CD4-positive, alpha-beta T cell (primary cell): ENCODE measurements at regions of chr16 and their contacts with region 1.

Region 1: DNA sequence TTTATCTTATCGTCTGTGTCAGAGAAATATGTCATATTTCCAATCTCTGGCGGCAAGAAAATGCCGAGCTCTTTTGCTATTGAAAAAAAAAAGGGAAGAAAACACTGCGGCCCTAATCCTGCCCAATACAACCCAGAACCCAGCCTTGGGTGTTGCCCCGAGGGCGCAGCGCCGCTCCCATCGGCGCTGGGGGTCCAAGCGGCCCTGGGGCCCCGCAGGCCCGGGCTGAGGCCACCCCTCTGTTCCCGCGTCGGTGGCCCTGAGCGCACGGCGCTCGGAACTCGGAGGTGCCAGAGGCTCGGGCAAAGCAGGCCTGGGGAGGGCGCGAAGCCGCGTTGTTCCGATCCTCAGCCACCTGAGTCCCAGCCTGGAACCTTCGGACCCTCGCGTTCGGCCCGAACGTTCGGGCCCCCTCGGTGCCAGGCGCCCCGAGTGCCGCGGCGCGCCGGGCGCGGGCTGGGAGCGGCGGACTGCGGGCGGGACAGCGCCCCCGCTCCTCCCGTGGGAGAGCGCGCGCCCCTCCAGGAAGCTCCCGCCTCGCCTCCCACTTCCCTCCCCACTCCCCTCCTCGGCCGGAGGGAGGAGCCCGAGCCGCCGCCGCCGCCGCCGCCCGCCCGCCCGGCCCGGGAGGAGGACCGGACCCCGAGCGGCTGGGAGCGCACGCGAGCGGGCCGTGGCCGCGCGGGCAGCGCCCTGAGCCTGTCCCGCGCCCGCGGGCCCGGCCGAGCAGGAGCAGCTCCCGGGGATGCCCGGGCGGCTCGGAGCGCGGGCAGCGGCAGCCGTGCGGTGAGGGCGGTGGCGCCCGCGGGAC is at the start of gene CPNE2:
- DNase-seq: peak in 7 of 14 experiments; percentile 3 to 63 (median 34)
- ATAC-seq: peak; percentile 48
- H3K4me3 ChIP-seq: peak within 1 kb of the TSS; percentile 34
- H3K4me3 Mint-ChIP-seq: peak within 1 kb of the TSS; percentile 87
- H3K27ac ChIP-seq: no peak within 1 kb of the TSS
- H3K27ac Mint-ChIP-seq: no peak within 1 kb of the TSS
- H3K4me1 ChIP-seq: peaks cover 21% of the 10 kb centered on the region
- H3K4me1 Mint-ChIP-seq: peaks cover 11% of the 10 kb centered on the region
- H3K27me3 ChIP-seq: no peaks in the 10 kb centered on the region
- H3K27me3 Mint-ChIP-seq: no peaks in the 10 kb centered on the region
- CTCF ChIP-seq: no peak
- total RNA-seq, gene CPNE2: 2.2 to 3.5 TPM

Region 2: DNA sequence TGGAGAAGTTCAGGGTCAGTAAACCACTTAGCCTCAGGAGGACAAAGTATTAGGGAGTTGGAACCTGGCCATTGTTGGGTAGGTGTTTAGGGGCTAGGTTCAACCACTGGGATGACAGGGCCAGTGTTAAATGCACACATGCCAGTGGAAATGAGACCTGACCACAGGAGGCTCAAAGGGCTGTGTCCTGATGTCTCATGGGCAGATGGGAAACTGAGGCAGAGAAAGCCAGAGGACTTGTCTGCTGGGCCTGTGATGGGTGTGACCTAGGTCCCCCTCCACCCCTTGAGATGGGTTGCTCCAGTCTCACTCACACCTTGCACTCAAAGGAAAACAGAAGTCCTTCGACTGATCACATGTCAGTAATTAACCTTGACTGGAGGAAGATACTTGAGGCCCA is 16.3 kb after region 1 on chr16:
- CTCF ChIA-PET with region 1: no interaction called
- POLR2A ChIA-PET with region 1: no interaction called
- intact Hi-C with region 1: loop called in 1 of 2 experiments (anchors 2 kb)
- DNase-seq: no peak
- ATAC-seq: no peak
- H3K4me3 ChIP-seq: no peak overlapping the region
- H3K4me3 Mint-ChIP-seq: no peak overlapping the region
- H3K27ac ChIP-seq: no peak overlapping the region
- H3K27ac Mint-ChIP-seq: no peak overlapping the region
- H3K4me1 ChIP-seq: peaks cover 25% of the 10 kb centered on the region
- H3K4me1 Mint-ChIP-seq: peaks cover 13% of the 10 kb centered on the region
- H3K27me3 ChIP-seq: no peaks in the 10 kb centered on the region
- H3K27me3 Mint-ChIP-seq: no peaks in the 10 kb centered on the region
- CTCF ChIP-seq: no peak

Region 3: DNA sequence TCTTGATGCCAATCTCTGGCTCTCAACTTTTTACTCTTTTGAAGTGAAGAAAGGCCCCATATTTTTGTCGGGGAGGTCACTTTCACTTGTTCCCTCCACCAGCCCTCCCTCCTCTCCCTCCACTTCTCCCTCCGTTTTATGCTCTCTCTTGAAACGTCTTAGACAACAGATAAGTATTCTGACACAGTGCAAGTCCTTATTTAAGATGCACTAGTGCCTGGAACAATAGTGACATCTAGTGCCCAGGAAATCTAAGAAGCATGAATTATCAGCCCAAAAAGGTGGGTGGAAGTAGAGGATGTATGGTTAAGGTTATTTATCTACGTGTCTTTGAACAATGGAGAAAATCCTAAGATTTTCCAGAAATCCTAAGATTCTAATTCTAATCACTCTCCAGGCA is 75.8 kb after region 1 on chr16:
- CTCF ChIA-PET with region 1: interaction called, 11 read pairs
- POLR2A ChIA-PET with region 1: interaction called, 5 read pairs
- intact Hi-C with region 1: loop called (anchors 1 to 2 kb)
- DNase-seq: peak in 4 of 14 experiments; percentile 24 to 84 (median 80)
- ATAC-seq: peak; percentile 98
- H3K4me3 ChIP-seq: no peak overlapping the region
- H3K4me3 Mint-ChIP-seq: no peak overlapping the region
- H3K27ac ChIP-seq: no peak overlapping the region
- H3K27ac Mint-ChIP-seq: no peak overlapping the region
- H3K4me1 ChIP-seq: peaks cover 5% of the 10 kb centered on the region
- H3K4me1 Mint-ChIP-seq: peaks cover 27% of the 10 kb centered on the region
- H3K27me3 ChIP-seq: no peaks in the 10 kb centered on the region
- H3K27me3 Mint-ChIP-seq: no peaks in the 10 kb centered on the region
- CTCF ChIP-seq: peak; percentile 75